H1 (cell line): ENCODE measurements at regions of chr7 and their contacts with region 1.

Region 1: GRCh38 chr7:31373337-31374289 is 33.1 kb upstream of the NEUROD6 start:
- DNase-seq: peak; percentile 56 to 76
- H3K4me3 ChIP-seq: no peak overlapping the region
- H3K27ac ChIP-seq: no peak overlapping the region
- H3K4me1 ChIP-seq: peaks cover 0 to 3% (median 0%) of the 10 kb centered on the region in 4 experiments; a peak in 2 of 7 replicates
- H3K27me3 ChIP-seq: peaks cover 0 to 9% (median 2%) of the 10 kb centered on the region in 4 experiments; a peak in 4 of 7 replicates
- CTCF ChIP-seq: peak; percentile 56 to 88 (median 85)
- EP300 ChIP-seq: no peak
- POLR2A ChIP-seq: no peak
- RAD21 ChIP-seq: peak; percentile 90 to 95

Region 2: DNA sequence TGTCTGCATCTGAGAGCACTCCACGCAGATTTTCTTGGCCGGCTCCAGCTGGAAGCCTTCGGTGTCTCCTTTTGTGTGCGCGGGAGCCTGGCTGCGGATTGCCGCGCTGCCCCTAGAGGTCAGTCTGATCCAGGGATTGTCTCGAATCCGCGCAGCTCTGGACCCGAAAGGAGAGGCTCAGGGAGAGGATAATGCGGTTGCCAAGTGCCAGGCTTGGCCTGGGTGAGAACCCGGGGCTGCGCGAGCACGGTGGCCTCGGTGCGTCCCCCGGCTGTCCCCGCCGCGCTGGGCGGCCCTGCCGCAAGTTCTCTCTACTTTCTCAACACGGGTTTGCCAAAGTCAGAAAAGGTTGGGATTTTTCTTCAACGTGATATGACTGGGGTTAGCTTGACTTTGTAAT is 180.6 kb before region 1 on chr7:
- CTCF ChIA-PET with region 1: interaction called, 41 read pairs
- POLR2A ChIA-PET with region 1: no interaction called
- DNase-seq: peak; percentile 76 to 84
- H3K4me3 ChIP-seq: no peak overlapping the region
- H3K27ac ChIP-seq: no peak overlapping the region
- H3K4me1 ChIP-seq: no peaks in the 10 kb centered on the region
- H3K27me3 ChIP-seq: no peaks in the 10 kb centered on the region; a peak in 1 of 7 replicates
- CTCF ChIP-seq: peak; percentile 90 to 95 (median 90)
- EP300 ChIP-seq: no peak
- POLR2A ChIP-seq: no peak
- RAD21 ChIP-seq: peak; percentile 96 to 98

Region 3: GRCh38 chr7:31345421-31345820 is 28.2 kb before region 1 on chr7:
- CTCF ChIA-PET with region 1: interaction called, 10 read pairs
- POLR2A ChIA-PET with region 1: no interaction called
- DNase-seq: no peak
- H3K4me3 ChIP-seq: no peak overlapping the region
- H3K27ac ChIP-seq: no peak overlapping the region
- H3K4me1 ChIP-seq: no peaks in the 10 kb centered on the region
- H3K27me3 ChIP-seq: no peaks in the 10 kb centered on the region
- CTCF ChIP-seq: no peak
- EP300 ChIP-seq: no peak
- POLR2A ChIP-seq: no peak
- RAD21 ChIP-seq: no peak

Region 4: DNA sequence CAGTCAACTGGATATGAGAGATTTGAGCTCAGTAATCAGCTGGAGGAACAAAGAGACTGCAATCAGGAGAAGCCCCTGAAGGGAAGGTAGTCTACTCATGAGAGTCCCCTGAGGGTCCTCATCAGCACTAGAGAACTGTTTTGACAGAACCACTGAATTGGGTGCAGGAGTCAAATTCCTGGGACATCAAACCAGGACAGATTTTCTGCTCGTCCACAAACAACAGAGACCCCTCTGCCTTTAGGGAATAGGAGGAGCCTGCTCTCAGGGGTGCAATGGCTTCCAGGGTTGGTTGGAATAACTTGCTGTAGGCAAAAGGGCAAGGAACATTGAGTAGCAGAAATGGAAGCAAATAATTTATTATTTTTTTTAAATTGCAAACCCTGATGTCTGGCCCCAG is 11.2 kb before region 1 on chr7:
- CTCF ChIA-PET with region 1: interaction called, 20 read pairs
- POLR2A ChIA-PET with region 1: no interaction called
- DNase-seq: no peak
- H3K4me3 ChIP-seq: no peak overlapping the region
- H3K27ac ChIP-seq: no peak overlapping the region
- H3K4me1 ChIP-seq: no peaks in the 10 kb centered on the region
- H3K27me3 ChIP-seq: no peaks in the 10 kb centered on the region; a peak in 1 of 7 replicates
- CTCF ChIP-seq: no peak
- EP300 ChIP-seq: no peak
- POLR2A ChIP-seq: no peak
- RAD21 ChIP-seq: no peak

Region 5: GRCh38 chr7:31488562-31489203 is 115.1 kb after region 1 on chr7:
- CTCF ChIA-PET with region 1: interaction called, 13 read pairs
- POLR2A ChIA-PET with region 1: no interaction called
- DNase-seq: peak; percentile 69 to 90
- H3K4me3 ChIP-seq: no peak overlapping the region
- H3K27ac ChIP-seq: no peak overlapping the region
- H3K4me1 ChIP-seq: peaks cover 0 to 5% (median 3%) of the 10 kb centered on the region in 4 experiments; a peak in 3 of 7 replicates
- H3K27me3 ChIP-seq: no peaks in the 10 kb centered on the region
- CTCF ChIP-seq: peak; percentile 84 to 92 (median 90)
- EP300 ChIP-seq: no peak
- POLR2A ChIP-seq: no peak
- RAD21 ChIP-seq: peak; percentile 91 to 96